ENCODE measurements at regions of chr1 and their contacts with region 1.

Region 1: DNA sequence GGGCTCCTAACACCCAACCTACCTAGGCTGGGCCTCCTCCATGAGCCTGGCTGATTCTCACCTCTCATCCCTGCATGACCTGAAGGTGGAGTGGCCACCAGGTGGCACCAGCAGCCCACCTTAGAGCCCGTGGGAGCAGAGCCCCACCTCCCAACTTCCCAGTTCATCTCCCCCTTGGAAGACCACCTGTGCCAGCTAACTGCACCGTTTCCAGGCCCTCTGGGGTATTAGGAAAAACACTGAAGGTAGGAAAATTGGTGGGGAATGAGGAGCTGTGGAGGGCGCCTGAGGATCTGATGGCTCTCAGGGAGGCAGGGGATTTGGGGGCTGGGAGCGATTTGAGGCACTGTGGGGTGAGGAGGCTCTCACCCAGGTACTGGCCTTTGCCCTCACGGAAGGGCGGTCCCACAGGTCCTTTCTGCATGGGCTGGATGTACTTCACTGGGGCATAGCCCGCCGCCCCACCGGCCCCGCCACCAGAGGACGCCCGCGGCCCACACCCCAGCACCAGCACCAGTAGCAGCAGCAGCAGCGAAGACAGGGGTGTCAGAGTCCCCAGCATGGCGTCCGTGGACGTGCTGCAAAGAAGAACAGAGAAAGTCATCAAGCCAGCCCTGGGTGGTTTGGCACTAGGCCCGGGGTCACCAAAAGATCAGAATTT is 11.1 kb downstream of the ADPRS start:
- DNase-seq: peak; percentile 79 to 89
- ATAC-seq: peak; percentile 87 to 94 (median 90)
- H3K4me3 ChIP-seq: no peak overlapping the region
- H3K27ac ChIP-seq: no peak overlapping the region
- H3K4me1 ChIP-seq: peaks cover 3% of the 10 kb centered on the region
- H3K27me3 ChIP-seq: no peaks in the 10 kb centered on the region
- CTCF ChIP-seq: peak; percentile 86

Region 2: GRCh38 chr1:36134505-36135329 is 34.9 kb after region 1 on chr1:
- intact Hi-C with region 1: loop called (anchors 2 to 5 kb)
- DNase-seq: peak in 1 of 2 donors; percentile 58
- ATAC-seq: peak; percentile 59 to 70 (median 66)
- H3K4me3 ChIP-seq: no peak overlapping the region
- H3K27ac ChIP-seq: peak overlapping the region; percentile 82
- H3K4me1 ChIP-seq: peaks cover 28% of the 10 kb centered on the region
- H3K27me3 ChIP-seq: no peaks in the 10 kb centered on the region
- CTCF ChIP-seq: peak; percentile 68

Region 3: GRCh38 chr1:36187800-36188593 is 88.2 kb after region 1 on chr1:
- intact Hi-C with region 1: loop called (anchors 2 to 5 kb)
- DNase-seq: peak; percentile 85 to 94
- ATAC-seq: peak; percentile 95 to 96 (median 96)
- H3K4me3 ChIP-seq: peak overlapping the region; percentile 22
- H3K27ac ChIP-seq: peak overlapping the region; percentile 89
- H3K4me1 ChIP-seq: peaks cover 19% of the 10 kb centered on the region
- H3K27me3 ChIP-seq: no peaks in the 10 kb centered on the region
- CTCF ChIP-seq: peak; percentile 93

Region 4: DNA sequence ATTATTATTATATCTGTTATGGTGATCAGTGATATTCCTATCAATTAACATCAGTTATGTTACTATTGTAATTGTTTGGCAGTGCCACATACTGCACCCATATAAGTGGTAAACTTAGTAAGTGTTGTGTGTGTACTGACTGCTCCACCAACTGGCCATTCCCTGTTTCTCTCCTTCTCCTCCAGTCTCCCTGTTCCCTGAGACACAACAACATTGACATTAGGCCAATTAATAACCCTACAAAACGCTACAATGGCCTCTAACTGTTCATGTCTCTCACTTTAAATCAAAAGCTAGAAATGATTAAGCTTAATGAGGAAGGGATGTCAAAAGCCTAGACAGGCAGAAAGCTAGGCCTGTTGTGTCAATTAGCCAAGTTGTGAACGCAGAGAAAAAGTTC is 117.9 kb after region 1 on chr1:
- intact Hi-C with region 1: loop called in 1 of 2 experiments (anchors 10 kb)
- DNase-seq: no peak
- ATAC-seq: peak; percentile 74 to 93 (median 82)
- H3K4me3 ChIP-seq: no peak overlapping the region
- H3K27ac ChIP-seq: peak overlapping the region; percentile 46
- H3K4me1 ChIP-seq: peaks cover under 1% of the 10 kb centered on the region
- H3K27me3 ChIP-seq: no peaks in the 10 kb centered on the region
- CTCF ChIP-seq: peak; percentile 39

Region 5: GRCh38 chr1:36285448-36286101 is 185.8 kb after region 1 on chr1:
- intact Hi-C with region 1: loop called in 1 of 2 experiments (anchors 5 kb)
- DNase-seq: no peak
- ATAC-seq: peak; percentile 81 to 85 (median 84)
- H3K4me3 ChIP-seq: peak overlapping the region; percentile 30
- H3K27ac ChIP-seq: peak overlapping the region; percentile 91
- H3K4me1 ChIP-seq: peaks cover 93% of the 10 kb centered on the region
- H3K27me3 ChIP-seq: no peaks in the 10 kb centered on the region
- CTCF ChIP-seq: peak; percentile 77